Dorsolateral prefrontal cortex (tissue), 120 donors: ENCODE measurements at regions of chr9 and their contacts with region 1.

Region 1: GRCh38 chr9:503881-504852 is 289.5 kb downstream of the DOCK8 start:
- DNase-seq: peak; percentile 38 to 86 (median 62)
- H3K4me3 ChIP-seq: peak within 1 kb of the TSS; percentile 53 to 82 (median 69)
- H3K27ac ChIP-seq: peak within 1 kb of the TSS in 51 of 59 donors; percentile 32 to 91 (median 73)
- H3K27me3 ChIP-seq: peaks cover 0 to 28% (median 2%) of the 10 kb centered on the region in 45 donors
- CTCF ChIP-seq: peak in 54 of 56 donors; percentile 16 to 81 (median 57)

Region 2: DNA sequence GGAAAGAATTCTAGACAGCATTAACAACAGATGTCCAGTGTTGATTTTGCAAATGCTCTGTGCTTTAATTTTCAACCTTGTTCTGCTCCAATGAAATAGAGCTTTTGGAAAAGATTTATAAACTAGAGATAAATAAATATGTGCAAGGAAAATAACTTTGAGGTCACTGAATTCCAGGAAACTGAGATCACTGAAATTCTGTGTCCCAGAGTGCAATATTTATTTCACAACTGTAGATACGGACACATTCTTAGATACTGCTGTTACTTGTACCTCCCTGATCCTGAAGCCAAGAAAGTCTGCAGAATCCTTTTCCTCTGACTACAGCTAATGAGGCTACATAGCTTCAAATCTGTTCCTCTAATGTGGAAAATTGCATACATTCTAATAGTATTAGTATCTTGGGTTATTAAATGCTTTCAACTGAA is 66.6 kb before region 1 on chr9:
- intact Hi-C with region 1: no loop called
- DNase-seq: no peak
- H3K4me3 ChIP-seq: no peak overlapping the region
- H3K27ac ChIP-seq: no peak overlapping the region
- H3K27me3 ChIP-seq: peaks cover 0 to 3% (median 0%) of the 10 kb centered on the region in 45 donors
- CTCF ChIP-seq: no peak

Region 3: DNA sequence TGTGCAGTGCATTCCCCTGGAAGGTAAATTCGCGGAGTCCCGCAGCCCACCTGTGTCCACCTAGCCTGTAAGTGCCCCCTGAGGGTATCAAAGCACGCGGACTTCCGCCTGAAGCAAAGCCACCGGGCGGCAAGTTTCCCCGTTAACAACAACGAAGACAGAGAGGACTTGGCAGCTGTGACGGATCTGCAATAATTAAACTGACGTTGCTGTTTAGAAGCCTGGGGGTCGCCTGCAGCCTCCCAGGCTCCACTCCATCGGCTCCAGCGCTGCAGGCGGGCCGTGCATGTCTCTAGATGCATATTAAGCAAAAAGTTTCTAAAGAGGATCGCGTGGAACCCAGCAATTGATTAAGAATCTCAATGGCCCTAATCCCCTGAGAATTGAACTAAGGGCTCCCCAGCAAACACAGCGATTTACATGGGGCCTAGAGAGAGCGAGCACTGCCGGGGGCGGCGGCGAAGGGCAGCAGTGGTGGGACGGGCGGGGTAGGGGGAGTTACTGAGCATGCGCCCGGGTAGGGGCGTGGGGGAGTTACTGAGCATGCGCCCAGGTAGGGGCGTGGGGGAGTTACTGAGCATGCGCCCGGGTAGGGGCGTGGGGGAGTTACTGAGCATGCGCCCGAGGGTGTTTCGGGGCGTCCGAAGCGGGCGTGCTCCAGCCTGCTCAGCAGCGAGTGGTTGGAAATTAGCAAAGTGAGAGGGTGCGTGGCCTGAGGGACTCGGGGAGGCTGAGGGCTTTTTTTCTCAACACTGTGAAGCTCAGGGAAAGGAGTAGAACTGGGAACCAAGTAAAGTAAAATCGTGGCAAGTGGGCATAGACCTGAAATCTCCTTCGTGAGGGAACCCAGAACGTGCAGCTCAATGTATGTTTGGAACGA is 34.3 kb before region 1 on chr9:
- intact Hi-C with region 1: loop called (anchors 1 to 5 kb)
- DNase-seq: peak; percentile 63 to 84 (median 74)
- H3K4me3 ChIP-seq: peak overlapping the region; percentile 39 to 96 (median 75)
- H3K27ac ChIP-seq: peak overlapping the region in 58 of 59 donors; percentile 11 to 94 (median 83)
- H3K27me3 ChIP-seq: no peaks in the 10 kb centered on the region
- CTCF ChIP-seq: peak in 14 of 56 donors; percentile 4 to 45 (median 20)

Region 4: DNA sequence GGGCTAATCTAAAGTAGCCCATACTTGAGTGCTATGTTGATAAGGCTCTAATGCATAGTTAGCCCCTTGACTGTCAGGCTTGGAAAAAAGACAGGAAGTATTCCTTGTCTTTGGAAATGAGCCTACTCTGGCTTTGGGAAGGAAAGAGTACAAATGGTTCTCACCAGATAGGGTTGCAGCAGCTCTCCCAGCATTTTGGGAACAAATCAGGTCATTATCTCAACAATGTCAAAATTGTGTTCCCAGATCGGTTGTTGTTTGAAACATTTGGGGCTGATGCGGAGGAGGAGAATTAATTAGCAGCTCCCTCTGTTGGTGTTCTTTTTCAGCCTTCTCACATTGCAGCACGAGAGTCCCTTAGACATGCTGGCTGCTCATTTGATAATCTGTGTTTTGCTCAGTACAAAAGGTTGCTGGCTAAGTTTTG is 42.6 kb after region 1 on chr9:
- intact Hi-C with region 1: loop called (anchors 1 to 5 kb)
- DNase-seq: peak in 2 of 10 donors; percentile 6 to 54
- H3K4me3 ChIP-seq: peak overlapping the region in 46 of 59 donors; percentile 2 to 62 (median 30)
- H3K27ac ChIP-seq: peak overlapping the region; percentile 14 to 93 (median 77)
- H3K27me3 ChIP-seq: no peaks in the 10 kb centered on the region
- CTCF ChIP-seq: peak in 55 of 56 donors; percentile 22 to 79 (median 60)

Region 5: GRCh38 chr9:567128-567746 is 63.1 kb after region 1 on chr9:
- intact Hi-C with region 1: no loop called
- DNase-seq: no peak
- H3K4me3 ChIP-seq: no peak overlapping the region
- H3K27ac ChIP-seq: peak overlapping the region in 16 of 59 donors; percentile 10 to 93 (median 48)
- H3K27me3 ChIP-seq: no peaks in the 10 kb centered on the region
- CTCF ChIP-seq: no peak

Region 6: GRCh38 chr9:763692-764524 is 259.7 kb after region 1 on chr9:
- intact Hi-C with region 1: loop called in 1 of 2 experiments (anchors 10 kb)
- DNase-seq: peak in 7 of 10 donors; percentile 43 to 76 (median 50)
- H3K4me3 ChIP-seq: peak overlapping the region in 19 of 59 donors; percentile 4 to 45 (median 17)
- H3K27ac ChIP-seq: no peak overlapping the region
- H3K27me3 ChIP-seq: peaks cover 0 to 10% (median 0%) of the 10 kb centered on the region in 45 donors
- CTCF ChIP-seq: peak in 55 of 56 donors; percentile 36 to 93 (median 79)